Head of caudate nucleus (tissue), 42 donors: ENCODE measurements at regions of chr17 and their contacts with region 1.

Region 1: DNA sequence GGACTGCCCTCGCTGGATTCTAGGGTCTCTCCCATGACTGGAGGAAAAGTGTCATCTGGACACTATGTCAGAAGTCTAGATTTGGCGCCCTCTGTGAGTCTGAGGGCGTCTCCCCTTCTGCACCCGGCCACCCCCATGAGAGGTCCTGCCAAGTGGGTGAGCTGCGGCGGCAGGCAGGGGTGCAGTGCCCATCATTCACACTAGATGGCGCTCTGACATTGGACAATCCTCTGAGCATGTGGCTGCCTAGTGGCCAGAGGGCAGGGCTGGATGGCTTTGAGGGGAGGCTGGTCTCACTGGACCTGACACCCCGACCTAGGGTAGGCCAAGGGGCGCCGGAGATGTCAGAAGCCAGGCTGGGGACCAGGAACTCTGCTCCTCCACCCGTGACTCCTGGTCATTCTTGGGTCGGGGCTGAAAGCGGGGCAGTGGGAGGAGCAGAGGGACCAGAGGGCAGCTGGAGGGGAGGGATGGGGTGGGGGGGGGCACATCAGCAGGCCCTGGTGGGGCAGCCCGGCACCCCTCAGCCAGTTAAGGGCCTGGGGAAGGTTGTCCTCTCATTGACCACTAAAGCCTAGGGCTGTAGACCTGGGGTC is 28.0 kb downstream of the MRM1 start:
- DNase-seq: peak; percentile 45 to 93 (median 85)

Region 2: DNA sequence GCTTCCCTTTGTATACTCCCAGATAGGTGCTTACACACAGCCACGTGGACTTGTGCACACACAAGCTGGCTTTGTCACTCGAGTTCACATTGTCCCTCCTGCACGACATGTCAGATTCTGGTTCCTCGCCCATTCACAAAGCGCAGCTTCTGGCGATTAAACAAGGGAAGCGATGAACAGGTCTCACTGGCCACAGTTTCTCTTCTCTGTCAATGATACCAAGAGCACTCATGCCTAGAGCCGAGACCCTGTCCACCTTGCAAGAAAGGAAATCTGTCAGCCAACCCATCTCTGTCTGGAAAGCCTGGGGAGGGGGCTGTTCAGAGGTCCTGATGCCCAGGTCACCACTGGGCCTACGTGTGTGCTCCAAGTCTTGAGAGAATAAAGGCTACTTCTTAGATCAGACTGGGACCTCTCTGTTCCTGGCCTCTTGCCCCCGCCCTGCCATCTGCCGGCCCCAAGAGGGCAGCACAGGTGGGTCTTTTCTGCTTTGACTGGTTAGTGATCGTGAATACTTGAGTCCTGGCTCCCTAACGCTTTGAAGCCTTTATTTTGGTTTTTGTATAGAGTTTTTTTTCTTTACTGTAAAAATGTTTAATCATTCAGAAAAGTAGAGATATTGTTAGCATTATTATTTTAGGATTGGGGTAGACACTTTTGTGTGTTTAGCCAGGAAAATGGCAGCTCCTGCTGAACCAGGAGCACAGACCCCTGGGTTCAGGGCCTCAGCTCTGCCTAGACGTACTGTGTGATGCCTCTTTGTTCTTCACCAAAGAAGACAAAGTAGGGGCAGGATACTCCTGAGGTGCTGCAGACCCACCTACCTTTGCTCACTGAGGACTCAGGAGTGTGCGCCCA is 76.8 kb after region 1 on chr17:
- intact Hi-C with region 1: no loop called
- DNase-seq: peak in 35 of 42 donors; percentile 17 to 70 (median 36)

Region 3: DNA sequence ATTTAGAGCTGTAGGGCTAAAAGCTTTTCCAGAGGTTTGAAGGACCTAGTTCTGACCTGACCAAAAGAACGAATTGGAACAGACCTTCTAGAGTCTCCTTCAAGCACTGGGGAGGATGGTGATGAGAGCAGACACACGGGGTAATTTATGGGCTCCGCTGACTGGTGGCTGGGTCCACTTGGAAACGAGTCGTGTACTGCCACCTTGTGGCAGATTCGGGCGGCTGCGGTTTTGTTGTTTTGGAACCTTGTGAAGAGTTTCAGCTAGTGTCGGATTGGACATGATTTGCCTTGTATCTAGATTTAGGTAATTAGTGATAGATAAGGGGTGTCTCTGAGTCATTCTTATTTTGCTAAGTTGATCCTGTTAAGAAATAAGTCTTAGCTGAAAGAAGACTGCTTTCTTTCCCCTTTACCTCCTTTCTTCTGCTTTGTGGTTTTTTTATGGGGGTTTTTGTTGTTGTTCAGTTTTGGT is 418.3 kb after region 1 on chr17:
- intact Hi-C with region 1: loop called (anchors 5 kb)
- DNase-seq: peak; percentile 70 to 95 (median 89)

Region 4: GRCh38 chr17:37239690-37240334 is 610.5 kb after region 1 on chr17:
- intact Hi-C with region 1: loop called (anchors 10 kb)
- DNase-seq: no peak